ENCODE measurements at regions of chr17 and their contacts with region 1.

Region 1: DNA sequence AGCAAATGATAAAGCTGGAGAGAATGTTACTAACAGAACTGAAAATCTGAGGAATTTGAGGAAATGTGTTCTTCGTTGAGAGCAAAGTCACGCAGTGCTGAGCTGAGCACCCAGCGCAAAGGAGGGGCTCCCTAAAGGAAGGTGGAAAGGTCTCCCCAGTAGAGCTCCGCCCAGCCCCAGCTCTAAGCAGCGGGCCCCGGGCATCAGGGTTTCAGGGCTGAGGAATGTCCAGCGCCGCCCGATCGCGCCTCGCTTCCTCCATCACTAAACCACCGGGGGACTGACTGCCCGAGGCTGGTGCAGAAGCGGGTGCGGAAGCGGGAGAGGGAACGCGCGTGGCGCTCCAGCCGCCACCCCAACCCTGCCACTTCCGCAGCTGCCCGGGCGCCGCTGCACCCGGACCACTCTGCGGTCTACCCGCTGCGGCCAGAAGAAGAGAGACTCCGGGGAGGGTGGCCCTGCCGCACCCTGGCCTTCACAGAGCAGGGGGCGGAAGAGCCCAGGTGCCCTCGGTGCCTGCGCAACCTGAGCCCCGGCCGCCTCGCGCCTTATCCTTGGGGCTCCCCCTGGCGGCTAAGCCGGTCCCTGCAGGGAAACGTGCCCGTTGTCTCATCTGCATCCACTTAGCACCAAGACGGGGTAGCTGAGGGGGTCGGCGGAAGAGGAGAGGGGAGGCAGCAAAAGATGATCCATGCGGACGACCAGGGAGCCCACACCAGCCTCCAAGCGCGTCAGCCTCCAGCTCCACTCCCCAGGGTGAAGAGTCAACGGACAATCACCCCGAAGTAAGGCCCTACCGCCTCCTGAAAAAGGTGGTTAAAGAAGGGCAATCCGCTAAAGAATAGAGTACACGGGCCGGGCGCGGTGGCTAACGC is 12.4 kb upstream of the GUCY2D start:
- DNase-seq: peak; percentile 85 to 94 (median 88)
- H3K4me3 ChIP-seq: peak overlapping the region in 1 of 2 donors; percentile 58
- H3K4me3 Mint-ChIP-seq: peak overlapping the region; percentile 76 to 90 (median 84)
- H3K27ac ChIP-seq: peak overlapping the region; percentile 35
- H3K27ac Mint-ChIP-seq: peak overlapping the region; percentile 63 to 92 (median 87)
- H3K4me1 ChIP-seq: peaks cover 16% of the 10 kb centered on the region
- H3K4me1 Mint-ChIP-seq: peaks cover 12 to 33% (median 19%) of the 10 kb centered on the region in 4 donors
- H3K27me3 ChIP-seq: no peaks in the 10 kb centered on the region
- H3K27me3 Mint-ChIP-seq: peaks cover 0 to 1% of the 10 kb centered on the region in 2 donors

Region 2: DNA sequence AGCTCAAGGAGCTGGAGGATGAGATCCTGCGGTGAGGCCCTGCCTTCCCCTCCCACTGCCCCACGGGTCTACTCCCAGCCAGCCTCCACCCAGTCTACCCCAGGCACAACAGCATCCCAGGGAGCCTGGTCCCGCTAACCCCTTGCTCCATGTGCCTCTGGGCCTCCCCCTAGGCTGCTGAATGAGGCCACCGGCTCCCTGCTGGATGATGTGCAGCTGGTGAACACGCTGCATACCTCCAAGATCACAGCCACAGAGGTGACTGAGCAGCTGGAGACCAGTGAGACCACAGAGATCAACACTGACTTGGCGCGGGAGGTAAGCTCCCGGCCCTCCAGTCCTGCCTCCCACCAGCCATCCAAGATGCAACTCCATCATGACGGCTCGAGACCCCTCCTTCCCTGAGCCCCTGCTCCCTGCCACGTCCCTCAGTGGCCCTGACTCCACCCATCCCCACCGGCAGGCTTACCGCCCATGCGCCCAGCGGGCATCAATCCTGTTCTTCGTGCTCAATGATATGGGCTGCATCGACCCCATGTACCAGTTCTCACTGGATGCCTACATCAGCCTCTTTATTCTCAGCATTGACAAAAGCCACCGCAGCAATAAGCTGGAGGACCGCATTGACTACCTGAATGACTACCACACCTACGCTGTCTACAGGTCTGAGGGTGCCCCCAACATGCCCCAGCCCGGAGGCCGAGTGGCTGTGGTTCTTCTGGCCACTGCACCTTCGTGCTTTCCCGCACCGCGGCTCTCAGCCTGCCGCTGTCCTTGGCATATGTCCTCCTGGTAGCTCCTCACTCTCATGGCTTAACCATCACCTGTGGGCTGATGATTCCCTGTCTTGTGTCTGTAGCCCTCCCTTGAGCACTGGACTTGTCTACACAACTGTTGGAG is 171.0 kb before region 1 on chr17:
- CTCF ChIA-PET with region 1: interaction called, 19 read pairs
- POLR2A ChIA-PET with region 1: no interaction called
- intact Hi-C with region 1: loop called (anchors 1 kb)
- DNase-seq: no peak
- H3K4me3 ChIP-seq: no peak overlapping the region
- H3K4me3 Mint-ChIP-seq: no peak overlapping the region
- H3K27ac ChIP-seq: no peak overlapping the region
- H3K27ac Mint-ChIP-seq: no peak overlapping the region
- H3K4me1 ChIP-seq: no peaks in the 10 kb centered on the region
- H3K4me1 Mint-ChIP-seq: no peaks in the 10 kb centered on the region
- H3K27me3 ChIP-seq: no peaks in the 10 kb centered on the region
- H3K27me3 Mint-ChIP-seq: no peaks in the 10 kb centered on the region

Region 3: DNA sequence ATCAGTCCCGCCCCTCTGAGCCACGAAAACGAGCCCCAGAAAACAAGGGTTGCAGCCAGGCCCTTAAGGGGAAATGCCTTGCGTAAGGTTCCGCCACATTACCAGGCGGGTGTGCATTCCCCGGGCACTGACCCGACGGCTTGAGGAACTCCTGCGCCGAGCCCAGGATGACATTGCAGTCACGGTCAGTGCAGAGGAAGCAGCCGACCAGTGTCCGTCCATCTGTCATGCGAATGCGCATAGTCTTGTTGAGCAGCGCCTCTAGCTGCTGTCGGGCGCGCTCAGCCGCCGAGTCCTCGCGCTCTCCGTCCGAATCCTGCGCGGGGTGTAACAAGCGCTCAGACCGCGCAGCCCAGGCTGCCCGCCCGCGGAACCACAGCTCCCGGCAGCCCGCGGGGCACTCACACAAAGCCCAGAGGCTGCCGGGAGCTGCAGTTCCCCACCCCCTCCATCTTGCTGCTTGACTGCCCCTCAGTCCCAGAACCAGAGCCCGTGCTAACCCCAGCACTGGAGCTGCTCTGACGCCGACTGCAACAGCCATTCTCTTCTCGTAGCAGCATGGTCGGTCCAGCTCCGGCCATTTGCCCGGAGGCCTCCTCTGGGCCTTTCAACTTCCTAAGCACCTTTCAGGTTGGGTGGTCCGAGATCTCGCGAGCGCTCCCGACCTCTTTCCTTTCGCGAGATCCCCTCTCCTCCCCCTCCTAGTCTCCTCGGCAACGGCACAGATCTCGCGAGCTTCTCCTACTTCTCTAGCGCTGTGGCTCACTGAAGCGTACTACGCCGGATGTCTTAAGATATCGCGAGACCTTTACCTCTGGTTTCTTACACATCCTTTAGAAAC is 132.9 kb before region 1 on chr17 and contains the start of gene NAA38:
- CTCF ChIA-PET with region 1: interaction called, 311 read pairs
- POLR2A ChIA-PET with region 1: interaction called, 30 read pairs
- intact Hi-C with region 1: loop called (anchors 1 kb)
- DNase-seq: peak; percentile 97 to 99 (median 98)
- H3K4me3 ChIP-seq: peak within 1 kb of the TSS; percentile 67 to 96
- H3K4me3 Mint-ChIP-seq: no peak within 1 kb of the TSS
- H3K27ac ChIP-seq: peak within 1 kb of the TSS; percentile 81
- H3K27ac Mint-ChIP-seq: no peak within 1 kb of the TSS
- H3K4me1 ChIP-seq: peaks cover 32% of the 10 kb centered on the region
- H3K4me1 Mint-ChIP-seq: peaks cover under 1 to 11% (median 7%) of the 10 kb centered on the region in 4 donors
- H3K27me3 ChIP-seq: no peaks in the 10 kb centered on the region
- H3K27me3 Mint-ChIP-seq: no peaks in the 10 kb centered on the region
- total RNA-seq, gene NAA38: 23.1 to 25.8 TPM

Region 4: DNA sequence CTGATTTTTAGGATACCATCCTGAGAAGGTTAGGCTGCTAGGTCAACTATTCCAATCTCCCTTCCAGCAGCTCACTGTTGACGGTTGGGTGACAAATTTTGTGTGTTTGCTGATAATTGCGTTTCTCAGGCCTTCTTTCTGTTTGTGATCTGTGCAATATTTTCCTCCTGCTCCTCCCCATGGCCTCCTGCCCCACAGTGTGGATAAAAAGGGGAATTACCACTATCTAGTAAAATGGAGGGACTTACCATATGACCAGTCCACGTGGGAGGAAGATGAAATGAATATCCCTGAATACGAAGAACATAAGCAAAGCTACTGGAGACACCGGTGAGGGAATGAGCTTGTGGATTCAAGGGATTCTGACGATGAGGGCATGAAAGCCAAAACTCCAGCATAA is 92.2 kb before region 1 on chr17:
- CTCF ChIA-PET with region 1: interaction called, 20 read pairs
- POLR2A ChIA-PET with region 1: no interaction called
- intact Hi-C with region 1: no loop called
- DNase-seq: peak; percentile 29 to 43 (median 36)
- H3K4me3 ChIP-seq: no peak overlapping the region
- H3K4me3 Mint-ChIP-seq: no peak overlapping the region
- H3K27ac ChIP-seq: no peak overlapping the region
- H3K27ac Mint-ChIP-seq: peak overlapping the region; percentile 11 to 82 (median 38)
- H3K4me1 ChIP-seq: no peaks in the 10 kb centered on the region
- H3K4me1 Mint-ChIP-seq: peaks cover 7 to 27% (median 11%) of the 10 kb centered on the region in 4 donors
- H3K27me3 ChIP-seq: no peaks in the 10 kb centered on the region
- H3K27me3 Mint-ChIP-seq: no peaks in the 10 kb centered on the region

Region 5: GRCh38 chr17:7931709-7932482 is 58.1 kb before region 1 on chr17 and contains the starts of genes CNTROB and TRAPPC1:
- CTCF ChIA-PET with region 1: interaction called, 83 read pairs
- POLR2A ChIA-PET with region 1: interaction called, 26 read pairs
- intact Hi-C with region 1: loop called (anchors 5 kb)
- DNase-seq: peak; percentile 99 to 100 (median 99)
- H3K4me3 ChIP-seq: peak within 1 kb of the TSS; percentile 84 to 100
- H3K4me3 Mint-ChIP-seq: peak within 1 kb of the TSS; percentile 94 to 100 (median 98)
- H3K27ac ChIP-seq: peak within 1 kb of the TSS; percentile 85
- H3K27ac Mint-ChIP-seq: peak within 1 kb of the TSS; percentile 88 to 100 (median 98)
- H3K4me1 ChIP-seq: peaks cover 33% of the 10 kb centered on the region
- H3K4me1 Mint-ChIP-seq: peaks cover 34 to 58% (median 44%) of the 10 kb centered on the region in 4 donors
- H3K27me3 ChIP-seq: no peaks in the 10 kb centered on the region
- H3K27me3 Mint-ChIP-seq: no peaks in the 10 kb centered on the region
- total RNA-seq, gene CNTROB: 29.7 to 30.1 TPM
- total RNA-seq, gene TRAPPC1: 116 TPM

Region 6: DNA sequence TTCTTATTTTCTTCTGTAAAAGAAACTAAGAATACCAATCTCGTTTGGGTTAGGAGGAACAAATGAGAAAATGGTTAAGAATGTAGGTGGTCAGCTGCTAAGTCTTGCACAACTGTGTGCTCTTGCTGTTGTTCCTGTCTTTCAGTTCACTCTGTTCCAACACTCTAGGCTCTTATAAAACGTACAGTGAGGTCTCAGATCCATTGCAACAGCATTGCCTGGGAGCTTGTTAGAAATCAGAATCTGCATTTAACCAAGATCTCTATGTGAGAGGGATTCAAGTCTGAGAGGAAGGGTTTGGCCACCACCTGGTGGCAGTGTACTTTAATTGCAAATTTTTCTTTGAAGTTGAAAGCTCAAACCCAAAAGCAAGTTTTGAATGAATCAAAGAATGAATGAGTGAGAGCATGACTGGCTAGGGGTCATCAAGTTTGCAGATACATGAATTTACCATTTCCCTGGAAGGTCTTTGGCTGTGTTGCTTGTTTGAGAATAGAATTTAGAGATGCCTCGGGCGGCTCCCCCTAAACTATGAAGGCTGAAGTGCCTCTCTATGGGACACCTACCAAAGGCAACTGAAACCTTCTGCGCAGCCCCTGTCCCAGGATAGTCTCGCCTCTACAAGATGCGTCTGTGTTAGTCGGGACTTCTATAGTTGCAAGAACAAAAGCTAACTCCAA is 51.4 kb after region 1 on chr17:
- CTCF ChIA-PET with region 1: interaction called, 16 read pairs
- POLR2A ChIA-PET with region 1: interaction called, 3 read pairs
- intact Hi-C with region 1: loop called (anchors 2 kb)
- DNase-seq: peak; percentile 29 to 49 (median 35)
- H3K4me3 ChIP-seq: no peak overlapping the region
- H3K4me3 Mint-ChIP-seq: no peak overlapping the region
- H3K27ac ChIP-seq: no peak overlapping the region
- H3K27ac Mint-ChIP-seq: no peak overlapping the region
- H3K4me1 ChIP-seq: no peaks in the 10 kb centered on the region
- H3K4me1 Mint-ChIP-seq: peaks cover 0 to 4% (median 0%) of the 10 kb centered on the region in 4 donors
- H3K27me3 ChIP-seq: no peaks in the 10 kb centered on the region
- H3K27me3 Mint-ChIP-seq: peaks cover 15 to 16% of the 10 kb centered on the region in 2 donors

Region 7: DNA sequence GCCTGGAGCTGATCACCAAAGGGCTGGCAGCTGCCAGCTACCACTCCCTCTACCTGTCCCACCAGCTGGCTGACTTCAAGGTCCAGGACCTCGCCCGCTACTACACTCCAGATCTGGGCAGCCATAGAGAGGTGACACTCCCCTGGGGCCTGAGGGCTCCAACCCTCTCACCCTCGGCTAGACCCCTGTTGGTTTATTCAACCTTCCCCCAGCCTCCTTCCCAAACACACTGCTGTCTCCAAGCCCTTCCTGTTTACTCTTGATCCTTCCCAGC is 79.5 kb after region 1 on chr17:
- CTCF ChIA-PET with region 1: no interaction called
- POLR2A ChIA-PET with region 1: no interaction called
- intact Hi-C with region 1: no loop called
- DNase-seq: no peak
- H3K4me3 ChIP-seq: no peak overlapping the region
- H3K4me3 Mint-ChIP-seq: no peak overlapping the region
- H3K27ac ChIP-seq: no peak overlapping the region
- H3K27ac Mint-ChIP-seq: no peak overlapping the region
- H3K4me1 ChIP-seq: peaks cover 23% of the 10 kb centered on the region
- H3K4me1 Mint-ChIP-seq: peaks cover 14 to 28% (median 22%) of the 10 kb centered on the region in 4 donors
- H3K27me3 ChIP-seq: peaks cover 23% of the 10 kb centered on the region
- H3K27me3 Mint-ChIP-seq: peaks cover 14 to 17% of the 10 kb centered on the region in 2 donors

Region 8: DNA sequence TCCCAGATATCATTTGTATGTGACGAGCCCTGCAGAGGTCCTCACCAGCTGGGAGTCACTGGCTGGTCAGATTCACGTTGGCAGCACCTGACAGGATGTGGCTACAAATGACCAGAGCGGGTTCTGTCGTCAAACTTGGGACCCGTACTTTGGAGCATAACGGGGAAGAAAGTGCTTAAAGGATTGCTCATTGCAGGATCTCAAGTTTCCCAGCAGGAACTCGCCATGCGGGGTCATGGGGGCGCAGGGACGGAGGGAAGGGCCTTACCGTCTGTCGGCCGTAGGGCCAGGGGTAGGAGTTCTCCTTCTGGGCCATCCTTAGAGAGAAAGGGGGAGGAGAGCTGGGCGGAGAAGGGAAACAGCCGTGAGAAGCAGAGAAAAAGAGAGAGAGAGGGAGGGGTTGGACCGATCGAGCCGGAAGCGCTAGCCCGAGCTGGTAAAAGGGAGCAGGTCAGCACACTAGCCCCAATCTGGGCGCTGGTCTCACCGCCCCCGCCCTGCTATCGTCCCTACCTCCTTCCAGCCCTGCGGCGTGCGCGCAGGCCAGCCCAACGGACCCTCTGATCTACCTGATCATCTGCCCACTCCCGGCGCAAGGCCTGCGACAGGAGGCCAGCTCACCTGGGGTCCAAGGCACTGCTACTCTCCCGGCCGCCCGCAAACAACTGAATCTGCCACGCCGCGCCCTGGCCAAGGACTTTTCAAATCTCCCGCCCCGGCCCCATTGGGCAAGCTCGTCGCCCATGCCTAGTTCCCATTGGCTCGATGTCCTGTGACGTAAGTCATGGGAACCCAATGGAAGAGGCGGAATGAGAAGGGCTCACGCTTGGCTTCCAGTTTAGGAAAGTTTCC is 220.1 kb after region 1 on chr17 and contains the start of gene AURKB:
- CTCF ChIA-PET with region 1: no interaction called
- POLR2A ChIA-PET with region 1: no interaction called
- intact Hi-C with region 1: no loop called
- DNase-seq: peak; percentile 90 to 98 (median 90)
- H3K4me3 ChIP-seq: peak within 1 kb of the TSS; percentile 71 to 83
- H3K4me3 Mint-ChIP-seq: peak within 1 kb of the TSS; percentile 85 to 96 (median 92)
- H3K27ac ChIP-seq: peak within 1 kb of the TSS; percentile 69
- H3K27ac Mint-ChIP-seq: peak within 1 kb of the TSS; percentile 82 to 95 (median 94)
- H3K4me1 ChIP-seq: peaks cover 15% of the 10 kb centered on the region
- H3K4me1 Mint-ChIP-seq: peaks cover 13 to 21% (median 17%) of the 10 kb centered on the region in 4 donors
- H3K27me3 ChIP-seq: no peaks in the 10 kb centered on the region
- H3K27me3 Mint-ChIP-seq: no peaks in the 10 kb centered on the region
- total RNA-seq, gene AURKB: 0.67 to 0.83 TPM